Activated CD4-positive, alpha-beta memory T cell treated with anti-CD3 and anti-CD28 coated beads, Interleukin-2, amount 10 ng/mL, durations not matched to agents 7 days and 5 days (primary cell): ENCODE measurements at regions of chr20 and their contacts with region 1.

Region 1: DNA sequence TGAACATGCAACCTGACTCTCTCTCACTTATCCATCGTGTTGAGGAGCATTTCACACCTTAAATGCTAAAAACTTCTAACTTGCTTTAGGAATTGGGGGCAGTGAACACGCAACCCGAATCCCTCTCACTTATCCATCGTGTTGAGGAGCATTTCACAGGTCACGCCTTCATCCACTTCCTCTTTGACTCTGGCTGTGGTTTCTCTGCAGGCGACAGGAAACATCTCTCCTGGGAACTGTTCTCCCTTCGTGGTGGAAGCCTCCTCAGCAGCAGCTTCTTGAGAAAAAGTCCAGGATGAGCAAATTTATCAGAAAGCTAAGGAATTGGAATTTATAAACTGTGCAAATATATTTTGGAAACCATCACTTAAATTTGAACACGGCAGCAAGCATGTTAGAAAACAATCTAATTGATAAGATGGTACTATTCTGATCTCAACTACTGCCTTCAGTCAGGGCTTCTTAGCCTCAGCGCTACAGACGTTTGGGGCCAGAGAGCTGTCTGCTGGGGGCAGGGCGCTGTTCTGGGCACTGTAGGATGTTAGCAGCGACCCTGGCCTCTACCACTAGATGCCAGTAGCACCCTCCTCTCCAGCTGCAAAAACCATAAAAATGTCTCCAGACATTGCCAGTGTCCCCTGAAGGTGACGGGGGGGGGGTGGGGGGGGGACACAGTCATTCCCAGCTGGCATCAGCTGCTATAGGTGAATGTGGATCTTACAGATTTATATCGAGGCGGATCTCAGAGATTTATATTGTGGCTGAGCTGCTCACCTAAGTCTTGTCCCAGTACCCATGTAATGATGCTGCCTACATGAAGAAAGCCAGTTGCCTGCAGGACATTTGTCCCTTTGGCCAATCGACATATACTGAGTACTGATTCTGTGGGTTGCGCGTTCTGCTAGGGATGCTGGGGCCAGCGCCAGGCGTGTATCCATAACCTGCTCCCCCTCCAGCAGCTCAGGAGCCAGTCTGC is 26.2 kb downstream of the CTCFL start:
- DNase-seq: peak; percentile 46
- H3K4me3 Mint-ChIP-seq: no peak overlapping the region
- H3K27ac Mint-ChIP-seq: no peak overlapping the region
- H3K4me1 Mint-ChIP-seq: peaks cover 17% of the 10 kb centered on the region
- H3K27me3 Mint-ChIP-seq: peaks cover 53% of the 10 kb centered on the region

Region 2: DNA sequence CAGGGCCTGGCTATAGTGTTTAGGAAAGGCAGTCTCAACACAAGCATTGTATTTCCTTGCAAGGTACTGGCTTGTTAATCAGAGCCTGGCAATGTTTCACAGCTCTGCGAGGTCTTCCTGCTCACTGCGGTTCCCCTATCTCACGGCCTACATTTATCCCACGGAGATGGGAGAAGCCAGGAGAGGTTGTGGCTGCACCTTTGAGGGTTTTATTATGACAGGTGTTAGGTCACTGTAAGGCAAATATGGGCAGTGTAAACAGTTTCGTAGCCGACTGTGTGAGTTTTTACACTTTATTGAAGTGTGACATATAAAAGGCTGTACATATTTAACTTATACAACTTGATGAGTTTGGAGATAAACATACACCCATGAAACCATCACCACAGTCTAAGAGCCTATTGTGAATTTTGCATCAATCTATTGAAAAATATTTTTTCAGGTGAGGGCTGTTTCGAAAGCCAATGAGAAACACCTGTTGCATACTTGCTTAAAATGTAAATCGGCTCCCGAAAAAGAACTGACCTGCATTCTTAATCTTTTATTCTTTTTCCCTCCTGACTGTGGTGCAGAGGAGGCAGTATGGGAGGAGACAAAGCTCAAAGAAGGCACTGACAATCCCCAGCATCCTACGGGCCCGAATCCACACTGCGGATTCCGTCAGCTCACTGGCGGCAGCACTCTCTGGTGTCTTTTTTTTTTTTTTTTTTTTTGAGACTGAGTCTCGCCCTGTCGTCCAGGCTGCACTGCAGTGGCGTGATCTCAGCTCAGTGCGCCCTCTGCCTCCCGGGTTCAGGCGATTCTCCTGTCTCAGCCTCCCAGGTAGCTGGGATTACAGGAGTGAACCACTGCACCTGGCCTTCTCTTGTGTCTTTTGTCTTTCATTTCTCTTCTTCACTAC is 115.0 kb before region 1 on chr20:
- CTCF ChIA-PET with region 1: interaction called, 23 read pairs
- POLR2A ChIA-PET with region 1: no interaction called
- DNase-seq: no peak
- H3K4me3 Mint-ChIP-seq: no peak overlapping the region
- H3K27ac Mint-ChIP-seq: no peak overlapping the region
- H3K4me1 Mint-ChIP-seq: peaks cover 42% of the 10 kb centered on the region
- H3K27me3 Mint-ChIP-seq: no peaks in the 10 kb centered on the region

Region 3: DNA sequence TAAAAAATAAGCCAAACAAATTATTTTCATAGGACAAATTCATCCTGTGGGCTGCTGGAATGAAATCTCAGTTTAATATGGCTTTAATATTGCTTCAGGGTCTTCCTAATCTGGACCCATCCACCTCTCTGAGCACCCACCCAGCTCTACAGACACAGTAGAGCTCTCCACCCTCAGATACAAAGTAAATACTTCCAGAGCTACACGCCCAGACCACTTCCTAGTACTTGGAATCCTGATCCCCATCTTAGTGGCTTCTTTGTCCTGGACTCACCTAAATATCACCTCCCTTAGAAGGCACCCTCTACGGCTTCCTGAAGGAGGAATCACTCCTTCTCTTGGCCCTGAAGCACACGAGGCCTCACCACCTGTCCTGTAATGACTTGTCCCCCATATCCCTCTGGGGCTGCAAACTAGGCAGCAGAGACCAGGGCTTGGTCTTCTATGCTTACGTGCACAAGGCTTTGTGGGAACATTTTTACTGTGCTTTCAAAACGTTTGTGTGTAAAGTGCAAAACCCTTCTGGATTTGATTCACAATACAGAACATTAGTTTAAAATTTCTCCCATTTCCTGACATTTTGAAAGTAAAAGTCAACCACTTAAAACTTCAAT is 23.8 kb after region 1 on chr20:
- CTCF ChIA-PET with region 1: no interaction called
- POLR2A ChIA-PET with region 1: no interaction called
- DNase-seq: no peak
- H3K4me3 Mint-ChIP-seq: no peak overlapping the region
- H3K27ac Mint-ChIP-seq: peak overlapping the region; percentile 2
- H3K4me1 Mint-ChIP-seq: peaks cover 21% of the 10 kb centered on the region
- H3K27me3 Mint-ChIP-seq: peaks cover 2% of the 10 kb centered on the region

Region 4: GRCh38 chr20:57596998-57597939 is 98.6 kb after region 1 on chr20:
- CTCF ChIA-PET with region 1: interaction called, 27 read pairs
- POLR2A ChIA-PET with region 1: no interaction called
- DNase-seq: peak; percentile 72
- H3K4me3 Mint-ChIP-seq: no peak overlapping the region
- H3K27ac Mint-ChIP-seq: no peak overlapping the region
- H3K4me1 Mint-ChIP-seq: peaks cover 17% of the 10 kb centered on the region
- H3K27me3 Mint-ChIP-seq: peaks cover 36% of the 10 kb centered on the region